ENCODE measurements at regions of chr6 and their contacts with region 1.

Region 1: DNA sequence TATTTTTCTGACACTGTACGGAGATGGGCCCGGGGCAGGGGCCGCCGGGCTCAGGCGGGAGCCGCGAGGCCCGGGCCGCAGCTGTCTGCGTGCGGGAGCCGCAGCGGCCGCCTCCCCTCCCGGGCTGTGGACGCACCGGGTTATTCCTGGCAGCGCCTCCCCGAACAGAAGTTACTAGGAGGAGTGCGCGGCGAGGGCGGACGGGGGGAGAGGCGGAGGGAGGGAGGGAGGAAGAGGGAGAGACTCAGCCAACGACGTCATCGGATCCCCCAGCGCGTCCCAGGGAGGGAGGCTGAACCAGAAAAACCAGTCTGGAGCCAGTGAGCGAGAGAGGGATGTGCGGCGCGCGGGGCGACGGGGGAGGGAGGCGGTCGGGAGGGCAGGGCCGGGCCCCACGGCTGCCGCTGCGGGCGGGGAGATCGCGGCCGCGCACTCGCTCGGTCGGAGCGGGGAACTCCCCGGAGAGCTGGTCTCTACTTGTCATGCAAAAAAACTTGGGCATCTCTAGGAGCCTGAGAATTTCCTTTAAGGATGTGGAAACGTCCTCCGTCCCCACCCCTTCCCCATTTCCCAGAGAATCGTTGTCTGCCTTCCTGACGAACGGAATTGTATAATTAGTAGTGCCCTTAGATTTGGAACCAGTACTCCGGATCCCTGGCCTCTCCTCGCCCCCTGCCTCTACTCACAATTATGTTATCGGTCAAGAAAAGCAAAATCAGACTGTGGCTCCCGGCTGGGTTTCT is 1.4 kb upstream of the HIVEP2 start:
- DNase-seq: peak; percentile 81
- H3K4me3 Mint-ChIP-seq: peak overlapping the region; percentile 92
- H3K27ac Mint-ChIP-seq: peak overlapping the region; percentile 97
- H3K4me1 Mint-ChIP-seq: peaks cover 43% of the 10 kb centered on the region
- H3K27me3 Mint-ChIP-seq: peaks cover 6% of the 10 kb centered on the region

Region 2: GRCh38 chr6:142395768-142396231 is 550.6 kb before region 1 on chr6:
- intact Hi-C with region 1: loop called (anchors 5 kb)
- DNase-seq: peak; percentile 12
- H3K4me3 Mint-ChIP-seq: no peak overlapping the region
- H3K27ac Mint-ChIP-seq: peak overlapping the region; percentile 10
- H3K4me1 Mint-ChIP-seq: peaks cover 15% of the 10 kb centered on the region
- H3K27me3 Mint-ChIP-seq: peaks cover 56% of the 10 kb centered on the region

Region 3: DNA sequence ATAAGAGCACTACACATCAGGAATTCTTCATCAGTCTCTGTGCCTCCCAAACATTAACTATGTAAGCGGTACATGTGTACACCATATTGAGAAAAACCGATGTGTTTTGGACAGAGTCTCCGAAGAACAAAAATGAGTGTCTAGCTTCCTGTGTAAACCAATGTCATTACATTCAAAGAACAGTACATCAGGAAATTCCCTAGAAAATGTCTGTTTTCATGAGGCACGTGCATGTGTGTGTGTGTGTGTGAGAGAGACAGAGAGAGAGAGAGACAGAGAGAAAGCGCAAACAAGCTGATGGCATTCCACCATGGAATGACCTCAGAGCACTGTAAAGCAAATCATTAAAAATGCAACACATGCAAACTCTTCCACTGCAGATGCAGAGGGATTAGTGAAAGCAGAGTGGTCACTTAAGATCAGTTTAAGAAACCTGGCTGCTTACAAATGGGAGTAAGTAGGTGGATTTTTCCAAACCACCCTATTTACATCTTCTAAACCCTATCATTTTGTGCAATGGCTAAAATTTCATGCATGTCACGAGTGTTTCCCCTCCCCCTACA is 135.3 kb before region 1 on chr6:
- intact Hi-C with region 1: loop called (anchors 1 kb)
- DNase-seq: peak; percentile 15
- H3K4me3 Mint-ChIP-seq: peak overlapping the region; percentile 3
- H3K27ac Mint-ChIP-seq: peak overlapping the region; percentile 77
- H3K4me1 Mint-ChIP-seq: peaks cover 56% of the 10 kb centered on the region
- H3K27me3 Mint-ChIP-seq: no peaks in the 10 kb centered on the region

Region 4: DNA sequence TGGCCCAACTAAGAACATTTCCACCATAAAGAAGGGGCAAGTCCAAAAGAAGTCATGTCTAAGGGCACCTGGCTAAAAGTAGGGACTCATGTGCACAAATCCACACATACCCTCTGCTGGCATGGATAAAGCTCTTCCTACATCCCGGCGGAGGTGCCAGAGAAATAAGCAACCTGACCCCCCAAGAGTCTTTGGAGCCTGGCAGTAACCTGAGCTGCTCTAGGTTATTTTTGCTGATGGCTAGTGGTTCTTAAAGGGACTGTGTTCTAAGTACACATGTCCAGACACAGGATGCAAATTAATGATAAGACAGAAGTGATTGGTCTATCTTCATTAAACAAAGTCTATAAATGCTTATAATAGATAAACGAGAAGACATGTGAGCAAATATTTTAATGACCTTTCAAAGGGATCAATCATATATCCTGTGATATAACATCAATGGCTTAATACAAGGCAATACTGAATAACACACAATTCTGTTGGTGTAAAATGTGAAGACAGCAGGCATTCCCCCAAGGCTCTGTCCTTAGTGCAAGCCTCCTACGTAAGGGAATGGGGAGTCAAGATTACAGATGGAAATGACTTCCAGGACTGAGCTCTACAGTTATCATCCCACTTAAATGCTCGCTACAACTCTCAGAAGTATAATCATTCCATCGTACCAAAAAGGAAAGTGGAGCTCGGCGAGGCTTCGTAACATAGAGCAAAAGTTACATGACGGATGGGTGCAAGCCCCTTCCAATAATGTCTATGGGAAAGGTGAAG is 53.9 kb before region 1 on chr6:
- intact Hi-C with region 1: no loop called
- DNase-seq: no peak
- H3K4me3 Mint-ChIP-seq: no peak overlapping the region
- H3K27ac Mint-ChIP-seq: no peak overlapping the region
- H3K4me1 Mint-ChIP-seq: peaks cover 42% of the 10 kb centered on the region
- H3K27me3 Mint-ChIP-seq: no peaks in the 10 kb centered on the region

Region 5: DNA sequence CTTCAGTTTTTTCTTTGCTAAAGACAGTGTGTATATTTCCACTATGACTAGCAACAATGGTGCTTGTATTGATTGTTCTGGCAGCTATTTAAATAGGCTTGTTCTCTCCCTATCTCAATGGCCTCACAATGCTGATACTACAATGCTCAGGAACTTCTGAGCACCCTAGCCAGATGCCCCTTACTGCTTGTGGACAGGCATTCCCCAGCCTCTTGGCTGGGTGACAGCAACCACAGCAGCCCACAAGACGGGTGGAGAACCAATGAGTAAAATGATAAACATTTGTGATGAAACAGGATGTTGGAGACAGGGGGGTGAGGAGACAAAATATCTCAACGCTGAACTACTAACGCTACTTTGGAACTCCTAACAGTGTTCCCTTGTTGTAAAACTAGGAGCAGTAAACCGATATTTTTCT is 43.7 kb before region 1 on chr6:
- intact Hi-C with region 1: loop called (anchors 1 kb)
- DNase-seq: peak; percentile 76
- H3K4me3 Mint-ChIP-seq: peak overlapping the region; percentile 49
- H3K27ac Mint-ChIP-seq: peak overlapping the region; percentile 91
- H3K4me1 Mint-ChIP-seq: peaks cover 63% of the 10 kb centered on the region
- H3K27me3 Mint-ChIP-seq: no peaks in the 10 kb centered on the region

Region 6: DNA sequence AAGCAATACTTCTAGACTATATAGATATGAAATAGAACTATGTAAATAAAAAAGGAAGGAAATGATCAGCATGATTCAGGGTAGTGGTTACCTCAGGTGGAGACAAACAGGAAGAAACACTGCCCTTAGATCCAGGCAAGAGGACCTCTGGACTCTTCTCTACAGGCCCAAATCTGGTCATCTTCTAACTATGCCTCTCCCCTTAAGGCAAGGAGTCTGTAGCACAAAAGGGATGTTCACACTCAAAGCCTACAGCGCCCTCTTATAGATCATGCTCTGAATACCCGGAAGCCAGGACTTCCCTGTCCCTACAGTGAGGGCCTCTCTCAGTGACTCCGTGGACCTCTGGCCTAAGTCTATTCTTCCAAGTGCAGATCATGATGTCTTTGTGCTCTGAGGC is 29.0 kb after region 1 on chr6:
- intact Hi-C with region 1: no loop called
- DNase-seq: no peak
- H3K4me3 Mint-ChIP-seq: no peak overlapping the region
- H3K27ac Mint-ChIP-seq: no peak overlapping the region
- H3K4me1 Mint-ChIP-seq: no peaks in the 10 kb centered on the region
- H3K27me3 Mint-ChIP-seq: peaks cover 4% of the 10 kb centered on the region

Region 7: GRCh38 chr6:143060354-143060805 is 114.0 kb after region 1 on chr6:
- intact Hi-C with region 1: loop called (anchors 1 kb)
- DNase-seq: peak; percentile 72
- H3K4me3 Mint-ChIP-seq: peak overlapping the region; percentile 90
- H3K27ac Mint-ChIP-seq: peak overlapping the region; percentile 94
- H3K4me1 Mint-ChIP-seq: peaks cover 28% of the 10 kb centered on the region
- H3K27me3 Mint-ChIP-seq: no peaks in the 10 kb centered on the region

Region 8: DNA sequence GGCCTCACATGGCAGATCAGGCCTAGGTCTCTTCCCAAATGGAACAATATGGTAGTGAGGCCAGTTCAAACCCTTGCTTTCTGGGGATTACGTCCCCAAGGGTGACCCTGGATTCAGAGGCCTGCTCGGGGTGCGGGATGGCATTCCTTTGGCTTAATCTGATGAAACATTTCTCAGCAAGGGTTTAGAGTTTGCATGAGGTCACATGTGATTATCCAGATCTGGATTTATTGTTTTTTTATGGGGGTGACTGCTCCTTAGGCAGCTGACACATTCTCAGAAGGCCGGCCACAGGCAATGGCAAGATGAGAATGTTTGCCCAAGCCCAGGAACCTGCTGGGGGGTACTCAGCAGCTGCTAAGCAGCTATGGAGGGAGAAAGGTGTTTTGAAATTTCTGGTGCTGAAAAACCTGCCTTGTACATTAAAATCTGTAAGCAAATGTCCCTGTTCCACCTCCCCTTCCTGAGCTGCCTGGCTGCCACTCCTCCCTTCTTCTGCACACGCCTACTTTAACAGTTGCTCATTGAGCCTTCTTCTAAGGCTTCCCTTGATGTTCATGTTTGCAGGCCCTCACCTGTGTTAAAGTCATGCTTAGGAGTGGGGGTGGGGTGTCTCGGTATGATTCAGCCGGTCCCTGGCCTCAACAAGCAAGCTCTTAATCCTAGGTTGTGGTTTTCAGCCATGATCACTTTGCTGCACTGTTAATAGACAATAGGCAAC is 603.0 kb after region 1 on chr6:
- intact Hi-C with region 1: loop called (anchors 10 kb)
- DNase-seq: no peak
- H3K4me3 Mint-ChIP-seq: peak overlapping the region; percentile 40
- H3K27ac Mint-ChIP-seq: peak overlapping the region; percentile 74
- H3K4me1 Mint-ChIP-seq: peaks cover 88% of the 10 kb centered on the region
- H3K27me3 Mint-ChIP-seq: no peaks in the 10 kb centered on the region

Measured in activated T-helper 1 cell treated with anti-CD3 and anti-CD28 coated beads, Interleukin-12 subunit alpha, Interleukin-12 subunit beta, Interleukin-2, Interleukin-4 antibody, amounts not matched to agents 30 ng/mL and 10 ng/mL and 1 ng/mL, durations not matched to agents 14 hours and 24 hours and 36 hours (primary cell).